Caco-2 (cell line): ENCODE measurements at regions of chr18 and their contacts with region 1.

Region 1: DNA sequence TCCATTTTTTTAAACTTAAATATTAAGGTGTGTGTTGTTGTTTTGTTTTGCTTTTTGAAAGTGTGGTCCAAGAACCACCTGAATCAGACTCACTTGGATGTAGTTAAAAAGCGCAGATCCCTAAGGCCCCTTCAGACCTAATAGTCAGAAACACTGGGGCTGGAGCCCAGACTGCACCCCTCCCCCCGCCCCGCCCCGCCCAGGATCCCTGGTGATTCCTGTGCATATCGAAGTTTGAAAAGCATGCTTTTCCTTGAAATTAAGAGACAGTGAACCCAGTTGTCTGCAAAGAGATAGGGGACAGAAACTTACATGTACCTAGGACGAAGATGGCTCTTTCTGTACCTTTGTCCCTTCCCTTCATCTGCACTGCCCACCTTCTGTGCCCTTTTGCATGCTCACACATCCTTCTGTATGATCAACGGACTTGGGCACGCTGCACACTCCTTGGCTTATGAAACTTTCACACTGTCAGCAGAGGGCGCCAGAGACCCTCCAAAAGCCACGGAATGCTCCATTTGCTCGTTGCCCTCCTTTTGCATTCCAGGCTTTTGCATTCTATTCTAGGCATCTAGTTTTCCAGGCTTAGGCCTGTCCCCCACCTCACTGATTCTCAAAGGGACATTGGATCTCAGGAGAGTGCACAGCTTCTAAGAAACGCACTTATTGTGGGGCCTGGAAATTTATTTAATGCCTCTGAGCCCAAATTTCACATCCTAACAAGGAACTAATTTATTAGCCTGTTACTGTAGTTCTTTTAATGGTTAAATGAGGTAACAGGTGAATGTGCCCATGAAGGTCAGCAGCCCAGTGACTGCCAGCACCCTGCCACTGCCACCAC is 32.8 kb upstream of the SLC14A1 start:
- DNase-seq: peak; percentile 58 to 73
- H3K4me3 ChIP-seq: no peak overlapping the region
- H3K4me3 Mint-ChIP-seq: no peak overlapping the region
- H3K27ac Mint-ChIP-seq: no peak overlapping the region
- H3K4me1 ChIP-seq: no peaks in the 10 kb centered on the region
- H3K4me1 Mint-ChIP-seq: no peaks in the 10 kb centered on the region
- H3K27me3 ChIP-seq: no peaks in the 10 kb centered on the region
- H3K27me3 Mint-ChIP-seq: no peaks in the 10 kb centered on the region
- CTCF ChIP-seq: peak; percentile 56 to 64

Region 2: GRCh38 chr18:45517181-45517741 is 173.9 kb before region 1 on chr18:
- CTCF ChIA-PET with region 1: no interaction called
- POLR2A ChIA-PET with region 1: no interaction called
- intact Hi-C with region 1: no loop called
- DNase-seq: no peak
- H3K4me3 ChIP-seq: no peak overlapping the region
- H3K4me3 Mint-ChIP-seq: no peak overlapping the region
- H3K27ac Mint-ChIP-seq: no peak overlapping the region
- H3K4me1 ChIP-seq: no peaks in the 10 kb centered on the region
- H3K4me1 Mint-ChIP-seq: no peaks in the 10 kb centered on the region
- H3K27me3 ChIP-seq: no peaks in the 10 kb centered on the region
- H3K27me3 Mint-ChIP-seq: no peaks in the 10 kb centered on the region
- CTCF ChIP-seq: no peak

Region 3: GRCh38 chr18:45839414-45840395 is 148.5 kb after region 1 on chr18:
- CTCF ChIA-PET with region 1: no interaction called
- POLR2A ChIA-PET with region 1: no interaction called
- intact Hi-C with region 1: loop called (anchors 1 kb)
- DNase-seq: peak; percentile 38 to 46
- H3K4me3 ChIP-seq: no peak overlapping the region
- H3K4me3 Mint-ChIP-seq: no peak overlapping the region
- H3K27ac Mint-ChIP-seq: no peak overlapping the region
- H3K4me1 ChIP-seq: 0 out of 2 replicates have a peak, but pooled peaks cover 7% of the 10 kb centered on the region
- H3K4me1 Mint-ChIP-seq: peaks cover 16% of the 10 kb centered on the region
- H3K27me3 ChIP-seq: no peaks in the 10 kb centered on the region
- H3K27me3 Mint-ChIP-seq: no peaks in the 10 kb centered on the region
- CTCF ChIP-seq: peak in 1 of 2 experiments; percentile 41

Region 4: DNA sequence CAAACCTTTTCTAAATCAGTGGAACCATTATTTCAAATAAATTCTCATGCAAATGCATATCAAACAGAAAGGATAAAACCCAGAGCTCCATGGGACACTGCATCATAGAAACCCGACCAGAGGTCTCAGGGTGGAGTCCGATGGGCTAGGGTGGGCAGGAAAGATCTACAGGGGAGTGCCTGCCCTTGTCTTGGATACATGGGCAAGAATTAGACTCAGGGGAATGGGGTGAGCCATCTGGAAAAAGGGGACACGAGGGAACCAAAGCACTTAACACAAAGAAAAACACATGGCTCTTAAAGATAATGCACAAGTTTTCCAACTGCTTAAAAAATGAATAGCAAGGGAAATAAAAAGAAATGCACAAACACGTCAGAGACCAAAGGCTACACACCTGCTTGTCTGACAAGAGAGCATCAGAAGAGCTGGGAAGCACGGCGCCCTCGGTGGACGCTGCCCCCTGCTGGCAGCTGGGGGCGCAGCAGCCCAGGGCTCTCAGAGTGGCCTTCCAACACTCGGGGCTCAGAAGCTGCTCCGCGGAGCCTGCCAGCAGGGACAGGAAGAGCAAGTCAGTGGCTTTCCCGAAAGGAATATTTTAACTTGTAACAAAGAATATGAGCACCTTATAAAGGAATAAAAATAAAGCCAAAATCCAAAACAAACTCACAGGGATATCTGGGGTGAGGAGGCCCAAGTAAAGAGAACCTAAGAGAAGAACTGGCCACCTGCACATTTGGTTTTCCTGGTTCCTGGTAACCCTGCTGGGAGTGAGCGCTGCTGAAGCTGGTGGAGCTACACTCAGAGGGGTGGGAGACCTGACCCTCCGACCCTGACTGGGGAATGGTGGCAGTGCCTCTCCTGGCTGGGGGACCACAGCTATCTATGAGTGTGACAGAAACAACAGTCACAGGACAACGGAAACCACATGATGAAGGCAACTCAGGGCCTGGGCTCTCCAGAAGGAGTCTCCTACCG is 188.8 kb after region 1 on chr18:
- CTCF ChIA-PET with region 1: no interaction called
- POLR2A ChIA-PET with region 1: no interaction called
- intact Hi-C with region 1: loop called (anchors 1 kb)
- DNase-seq: peak; percentile 36 to 64
- H3K4me3 ChIP-seq: no peak overlapping the region
- H3K4me3 Mint-ChIP-seq: no peak overlapping the region
- H3K27ac Mint-ChIP-seq: no peak overlapping the region
- H3K4me1 ChIP-seq: no peaks in the 10 kb centered on the region
- H3K4me1 Mint-ChIP-seq: no peaks in the 10 kb centered on the region
- H3K27me3 ChIP-seq: no peaks in the 10 kb centered on the region
- H3K27me3 Mint-ChIP-seq: no peaks in the 10 kb centered on the region
- CTCF ChIP-seq: peak; percentile 81

Region 5: GRCh38 chr18:45910405-45911023 is 219.3 kb after region 1 on chr18:
- CTCF ChIA-PET with region 1: no interaction called
- POLR2A ChIA-PET with region 1: no interaction called
- intact Hi-C with region 1: loop called (anchors 1 kb)
- DNase-seq: peak; percentile 36 to 51
- H3K4me3 ChIP-seq: no peak overlapping the region
- H3K4me3 Mint-ChIP-seq: no peak overlapping the region
- H3K27ac Mint-ChIP-seq: no peak overlapping the region
- H3K4me1 ChIP-seq: no peaks in the 10 kb centered on the region
- H3K4me1 Mint-ChIP-seq: no peaks in the 10 kb centered on the region
- H3K27me3 ChIP-seq: no peaks in the 10 kb centered on the region
- H3K27me3 Mint-ChIP-seq: no peaks in the 10 kb centered on the region
- CTCF ChIP-seq: peak; percentile 25 to 46